ENCODE measurements at regions of chr11 and their contacts with region 1.

Region 1: DNA sequence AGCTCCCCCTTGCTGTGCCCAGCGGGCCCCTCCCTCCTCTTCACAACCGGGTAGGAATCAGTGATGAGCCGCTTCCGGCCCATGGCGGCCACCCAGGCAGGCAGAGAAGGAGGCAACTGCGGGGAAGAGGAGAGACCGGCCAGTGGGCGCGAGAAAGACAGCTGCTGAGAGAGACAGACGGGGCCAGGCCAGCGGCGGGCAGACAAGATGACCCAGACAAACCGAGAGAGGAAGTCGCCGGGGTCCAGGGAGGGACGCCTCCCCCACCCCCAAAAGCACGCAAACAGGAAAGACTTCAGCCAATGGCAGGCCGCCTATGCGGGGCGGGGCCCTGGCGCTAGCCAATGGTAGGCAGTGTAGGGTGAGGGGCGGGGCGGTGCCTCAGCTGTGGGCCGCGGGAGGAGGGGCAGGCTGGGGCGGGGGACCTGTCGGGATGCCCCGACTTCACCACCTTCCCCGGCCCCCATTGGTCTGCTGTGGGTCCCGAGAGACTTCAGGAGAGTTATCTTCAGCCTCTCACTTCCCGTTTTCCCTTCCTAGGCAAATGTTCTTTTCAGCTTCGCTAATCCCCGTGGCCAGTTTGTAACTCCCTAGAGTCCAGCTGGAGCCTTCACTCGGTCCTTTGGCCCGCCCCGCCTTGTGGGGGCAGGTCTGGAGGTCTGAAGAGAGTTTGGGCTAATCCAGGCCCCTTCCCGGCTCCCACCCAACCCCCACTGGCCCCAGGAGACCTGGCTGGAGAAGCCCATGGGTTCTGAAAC is at the start of gene POLD4:
- DNase-seq: peak; percentile 99
- H3K4me3 ChIP-seq: peak within 1 kb of the TSS; percentile 61
- H3K27ac ChIP-seq: peak within 1 kb of the TSS; percentile 96 to 98
- H3K4me1 ChIP-seq: peaks cover 22% of the 10 kb centered on the region
- H3K27me3 ChIP-seq: no peaks in the 10 kb centered on the region
- CTCF ChIP-seq: no peak
- EP300 ChIP-seq: peak; percentile 54
- POLR2A ChIP-seq: peak; percentile 83
- total RNA-seq, gene POLD4: 22.6 to 57.7 (median 47.2) TPM

Region 2: DNA sequence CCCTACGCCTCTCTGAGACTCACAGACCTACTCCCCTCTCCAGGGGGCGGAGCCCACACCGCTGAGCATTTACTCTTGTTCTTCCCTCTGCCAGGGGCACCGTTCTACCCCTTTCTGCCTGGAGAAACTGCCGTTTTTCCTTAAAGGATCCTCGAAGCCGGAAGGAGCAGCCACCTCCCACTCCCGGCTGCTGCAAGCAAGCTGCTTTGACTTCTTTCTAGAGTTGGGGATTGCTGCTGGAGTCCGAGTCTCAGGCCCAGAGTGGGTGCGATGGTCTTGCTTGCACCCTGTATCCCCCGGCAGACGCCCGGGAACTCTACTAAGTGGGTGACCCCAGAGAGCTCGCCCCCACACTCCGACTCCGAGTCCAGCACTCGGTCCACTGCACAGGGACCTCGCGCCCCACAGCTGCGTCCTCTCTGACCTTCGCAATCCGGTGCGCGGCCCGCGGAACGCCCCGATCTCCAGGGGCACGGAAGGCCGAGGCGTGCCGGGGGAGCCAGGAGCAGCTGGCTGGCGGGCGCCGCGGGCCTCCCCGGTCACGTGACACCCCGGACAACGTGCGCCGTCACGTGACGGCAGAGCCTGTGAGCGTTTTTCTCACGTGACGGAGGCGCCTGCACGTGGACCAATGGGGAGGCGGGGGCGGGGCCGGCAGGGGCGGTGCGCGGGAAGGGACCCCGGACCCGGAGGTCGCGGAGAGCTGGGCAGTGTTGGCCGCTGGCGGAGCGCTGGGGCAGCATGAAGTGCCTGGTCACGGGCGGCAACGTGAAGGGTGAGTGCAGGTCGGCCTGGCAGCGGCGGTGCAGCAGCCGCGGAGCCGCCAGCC is 38.0 kb after region 1 on chr11 and contains the start of gene RAD9A:
- intact Hi-C with region 1: loop called in 1 of 4 experiments (anchors 5 kb)
- DNase-seq: peak; percentile 94 to 97 (median 95)
- H3K4me3 ChIP-seq: peak within 1 kb of the TSS; percentile 56
- H3K27ac ChIP-seq: peak within 1 kb of the TSS; percentile 62 to 73
- H3K4me1 ChIP-seq: peaks cover 3% of the 10 kb centered on the region
- H3K27me3 ChIP-seq: no peaks in the 10 kb centered on the region
- CTCF ChIP-seq: peak in 1 of 3 donors; percentile 37
- EP300 ChIP-seq: peak; percentile 71
- POLR2A ChIP-seq: peak; percentile 29
- total RNA-seq, gene RAD9A: 13.9 to 51.7 (median 23.5) TPM

Region 3: GRCh38 chr11:67507864-67508485 is 154.5 kb after region 1 on chr11 and contains the start of gene CDK2AP2:
- intact Hi-C with region 1: loop called in 2 of 4 experiments (anchors 2 to 5 kb)
- DNase-seq: peak; percentile 98 to 100 (median 99)
- H3K4me3 ChIP-seq: peak within 1 kb of the TSS; percentile 80
- H3K27ac ChIP-seq: peak within 1 kb of the TSS; percentile 63 to 79
- H3K4me1 ChIP-seq: peaks cover 13% of the 10 kb centered on the region
- H3K27me3 ChIP-seq: no peaks in the 10 kb centered on the region
- CTCF ChIP-seq: peak in 1 of 3 donors; percentile 22
- EP300 ChIP-seq: no peak
- POLR2A ChIP-seq: peak; percentile 68
- total RNA-seq, gene CDK2AP2: 15.8 to 66.1 (median 34.6) TPM

Region 4: GRCh38 chr11:67534070-67534679 is 180.7 kb after region 1 on chr11:
- intact Hi-C with region 1: no loop called
- DNase-seq: no peak
- H3K4me3 ChIP-seq: no peak overlapping the region
- H3K27ac ChIP-seq: no peak overlapping the region
- H3K4me1 ChIP-seq: peaks cover 6% of the 10 kb centered on the region
- H3K27me3 ChIP-seq: no peaks in the 10 kb centered on the region
- CTCF ChIP-seq: no peak
- EP300 ChIP-seq: no peak
- POLR2A ChIP-seq: no peak